Naive thymus-derived CD4-positive, alpha-beta T cell (primary cell): ENCODE measurements at regions of chr17 and their contacts with region 1.

Region 1: GRCh38 chr17:82022981-82023374 is at the start of gene LRRC45:
- DNase-seq: peak; percentile 97 to 100 (median 100)
- ATAC-seq: peak; percentile 97
- H3K4me3 ChIP-seq: peak within 1 kb of the TSS; percentile 71
- H3K4me3 Mint-ChIP-seq: peak within 1 kb of the TSS; percentile 80 to 91 (median 84)
- H3K27ac ChIP-seq: peak within 1 kb of the TSS; percentile 65
- H3K27ac Mint-ChIP-seq: peak within 1 kb of the TSS in 7 of 9 donors; percentile 41 to 88 (median 66)
- H3K4me1 ChIP-seq: peaks cover 16 to 29% of the 10 kb centered on the region in 2 donors
- H3K4me1 Mint-ChIP-seq: peaks cover 7 to 28% (median 22%) of the 10 kb centered on the region in 7 donors
- H3K27me3 ChIP-seq: no peaks in the 10 kb centered on the region
- H3K27me3 Mint-ChIP-seq: no peaks in the 10 kb centered on the region
- total RNA-seq, gene LRRC45: 9.2 to 39.1 (median 15.0) TPM

Region 2: DNA sequence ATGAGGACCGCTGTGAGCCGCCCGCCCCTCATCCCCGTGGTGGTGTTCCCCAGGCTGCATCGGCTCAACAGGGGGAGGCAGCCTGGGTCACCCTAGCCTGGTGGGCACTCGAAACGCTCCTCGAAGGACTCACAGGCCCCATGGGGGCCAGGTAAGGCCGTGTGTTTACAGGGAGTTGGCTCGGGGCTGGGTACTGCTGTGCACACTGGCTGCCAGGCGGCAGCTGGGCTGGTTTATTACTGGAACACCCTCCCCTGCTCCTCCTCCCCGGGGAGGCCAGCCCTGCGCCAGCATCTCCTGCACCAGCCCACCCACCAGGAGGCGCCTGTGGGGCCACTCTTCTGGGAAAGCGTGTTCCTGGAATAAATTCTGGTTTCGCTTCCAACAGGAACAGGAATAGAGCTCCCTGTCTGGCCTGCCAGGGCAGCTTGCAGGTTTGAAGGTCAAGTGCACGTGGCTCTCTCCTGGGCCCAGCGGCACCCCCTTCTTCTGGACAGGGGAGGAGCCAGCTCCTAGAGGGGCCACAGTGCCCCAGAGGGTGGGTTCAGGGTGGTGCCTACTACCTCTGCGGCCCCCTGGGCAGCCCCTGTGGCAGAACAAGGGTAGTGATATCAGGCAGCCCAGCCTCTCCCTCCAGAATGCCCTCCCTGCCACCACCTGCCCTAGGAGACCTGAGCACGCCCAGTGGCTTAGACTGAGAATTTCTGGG is 201.2 kb before region 1 on chr17:
- CTCF ChIA-PET with region 1: no interaction called
- POLR2A ChIA-PET with region 1: no interaction called
- intact Hi-C with region 1: no loop called
- DNase-seq: peak in 1 of 9 donors; percentile 34
- ATAC-seq: peak; percentile 52
- H3K4me3 ChIP-seq: no peak overlapping the region
- H3K4me3 Mint-ChIP-seq: no peak overlapping the region
- H3K27ac ChIP-seq: no peak overlapping the region
- H3K27ac Mint-ChIP-seq: no peak overlapping the region
- H3K4me1 ChIP-seq: no peaks in the 10 kb centered on the region
- H3K4me1 Mint-ChIP-seq: peaks cover 0 to 6% (median 5%) of the 10 kb centered on the region in 7 donors
- H3K27me3 ChIP-seq: no peaks in the 10 kb centered on the region
- H3K27me3 Mint-ChIP-seq: peaks cover 0 to 8% (median 5%) of the 10 kb centered on the region in 5 donors

Region 3: GRCh38 chr17:81871387-81872230 is 151.4 kb before region 1 on chr17:
- CTCF ChIA-PET with region 1: no interaction called
- POLR2A ChIA-PET with region 1: no interaction called
- intact Hi-C with region 1: loop called in 1 of 2 experiments (anchors 1 kb)
- DNase-seq: peak; percentile 93 to 99 (median 97)
- ATAC-seq: peak; percentile 45
- H3K4me3 ChIP-seq: peak overlapping the region; percentile 93
- H3K4me3 Mint-ChIP-seq: peak overlapping the region; percentile 82 to 91 (median 86)
- H3K27ac ChIP-seq: peak overlapping the region; percentile 98
- H3K27ac Mint-ChIP-seq: peak overlapping the region; percentile 88 to 97 (median 95)
- H3K4me1 ChIP-seq: peaks cover 25 to 28% of the 10 kb centered on the region in 2 donors
- H3K4me1 Mint-ChIP-seq: peaks cover 11 to 43% (median 41%) of the 10 kb centered on the region in 7 donors
- H3K27me3 ChIP-seq: no peaks in the 10 kb centered on the region
- H3K27me3 Mint-ChIP-seq: no peaks in the 10 kb centered on the region

Region 4: DNA sequence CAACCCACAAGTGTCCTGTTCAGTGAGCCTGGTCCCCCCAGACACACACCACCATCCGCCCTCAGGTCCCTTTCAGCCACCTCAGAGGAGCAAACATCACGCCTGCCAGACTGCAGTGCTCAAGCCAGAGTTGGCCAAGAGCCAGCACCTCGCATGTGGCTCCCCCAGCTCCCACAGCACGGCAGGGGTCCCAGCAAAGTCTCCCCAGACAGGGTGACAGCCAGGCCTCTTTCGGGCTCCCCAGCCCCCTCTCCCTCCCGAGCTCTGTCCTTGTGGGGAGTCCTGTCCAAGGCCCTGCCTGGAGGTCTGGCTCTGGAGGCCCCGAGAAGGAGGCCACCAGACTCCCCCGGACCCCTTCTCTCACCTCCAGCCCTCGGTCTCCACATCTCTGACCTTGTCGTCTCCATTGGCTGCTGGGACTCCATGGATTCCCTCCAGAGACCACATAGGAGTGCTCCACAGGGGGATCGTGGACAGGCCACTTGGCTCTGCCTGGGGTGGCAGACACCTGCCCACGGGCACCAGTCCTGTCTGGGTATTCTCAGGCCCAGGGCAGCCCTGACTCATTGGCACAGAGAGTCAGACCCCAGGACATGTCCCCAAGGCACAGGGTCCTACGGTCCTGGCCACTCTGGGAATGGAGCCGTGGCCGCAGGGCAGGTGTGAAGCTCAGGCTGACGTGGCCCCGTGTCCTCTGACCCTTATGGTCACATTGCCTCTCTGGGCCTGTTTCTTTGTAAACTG is 74.2 kb before region 1 on chr17:
- CTCF ChIA-PET with region 1: interaction called, 14 read pairs
- POLR2A ChIA-PET with region 1: no interaction called
- intact Hi-C with region 1: no loop called
- DNase-seq: no peak
- ATAC-seq: no peak
- H3K4me3 ChIP-seq: no peak overlapping the region
- H3K4me3 Mint-ChIP-seq: no peak overlapping the region
- H3K27ac ChIP-seq: no peak overlapping the region
- H3K27ac Mint-ChIP-seq: no peak overlapping the region
- H3K4me1 ChIP-seq: peaks cover 0 to 4% of the 10 kb centered on the region in 2 donors
- H3K4me1 Mint-ChIP-seq: peaks cover 0 to 11% (median 4%) of the 10 kb centered on the region in 7 donors
- H3K27me3 ChIP-seq: no peaks in the 10 kb centered on the region
- H3K27me3 Mint-ChIP-seq: peaks cover 0 to 12% (median 0%) of the 10 kb centered on the region in 5 donors

Region 5: GRCh38 chr17:81977211-81978027 is 45.6 kb before region 1 on chr17 and contains the start of gene ASPSCR1:
- CTCF ChIA-PET with region 1: interaction called, 8 read pairs
- POLR2A ChIA-PET with region 1: interaction called, 3 read pairs
- intact Hi-C with region 1: loop called (anchors 1 kb)
- DNase-seq: peak; percentile 86 to 96 (median 93)
- ATAC-seq: peak; percentile 98
- H3K4me3 ChIP-seq: peak within 1 kb of the TSS; percentile 79
- H3K4me3 Mint-ChIP-seq: peak within 1 kb of the TSS; percentile 93 to 99 (median 96)
- H3K27ac ChIP-seq: peak within 1 kb of the TSS; percentile 90
- H3K27ac Mint-ChIP-seq: peak within 1 kb of the TSS; percentile 94 to 99 (median 97)
- H3K4me1 ChIP-seq: peaks cover 16 to 19% of the 10 kb centered on the region in 2 donors
- H3K4me1 Mint-ChIP-seq: peaks cover 26 to 51% (median 38%) of the 10 kb centered on the region in 7 donors
- H3K27me3 ChIP-seq: no peaks in the 10 kb centered on the region
- H3K27me3 Mint-ChIP-seq: peaks cover 0 to 7% (median 0%) of the 10 kb centered on the region in 5 donors
- total RNA-seq, gene ASPSCR1: 36.4 to 46.7 (median 46.0) TPM

Region 6: GRCh38 chr17:82008941-82009405 is 14.0 kb before region 1 on chr17:
- CTCF ChIA-PET with region 1: no interaction called
- POLR2A ChIA-PET with region 1: no interaction called
- intact Hi-C with region 1: no loop called
- DNase-seq: no peak
- ATAC-seq: no peak
- H3K4me3 ChIP-seq: no peak overlapping the region
- H3K4me3 Mint-ChIP-seq: no peak overlapping the region
- H3K27ac ChIP-seq: no peak overlapping the region
- H3K27ac Mint-ChIP-seq: no peak overlapping the region
- H3K4me1 ChIP-seq: no peaks in the 10 kb centered on the region
- H3K4me1 Mint-ChIP-seq: peaks cover 0 to 3% (median 0%) of the 10 kb centered on the region in 7 donors
- H3K27me3 ChIP-seq: no peaks in the 10 kb centered on the region
- H3K27me3 Mint-ChIP-seq: no peaks in the 10 kb centered on the region

Region 7: GRCh38 chr17:82065638-82066303 is 42.8 kb after region 1 on chr17 and contains the start of gene DUS1L:
- CTCF ChIA-PET with region 1: no interaction called
- POLR2A ChIA-PET with region 1: interaction called, 5 read pairs
- intact Hi-C with region 1: loop called in 1 of 2 experiments (anchors 1 kb)
- DNase-seq: peak; percentile 55 to 87 (median 71)
- ATAC-seq: peak; percentile 95
- H3K4me3 ChIP-seq: peak within 1 kb of the TSS; percentile 66
- H3K4me3 Mint-ChIP-seq: peak within 1 kb of the TSS; percentile 73 to 91 (median 82)
- H3K27ac ChIP-seq: peak within 1 kb of the TSS; percentile 86
- H3K27ac Mint-ChIP-seq: peak within 1 kb of the TSS; percentile 86 to 95 (median 93)
- H3K4me1 ChIP-seq: peaks cover 8 to 27% of the 10 kb centered on the region in 2 donors
- H3K4me1 Mint-ChIP-seq: peaks cover 0 to 18% (median 10%) of the 10 kb centered on the region in 7 donors
- H3K27me3 ChIP-seq: no peaks in the 10 kb centered on the region
- H3K27me3 Mint-ChIP-seq: no peaks in the 10 kb centered on the region
- total RNA-seq, gene DUS1L: 127 to 157 (median 147) TPM

Region 8: GRCh38 chr17:82092094-82092994 is 69.4 kb after region 1 on chr17:
- CTCF ChIA-PET with region 1: no interaction called
- POLR2A ChIA-PET with region 1: no interaction called
- intact Hi-C with region 1: no loop called
- DNase-seq: no peak
- ATAC-seq: no peak
- H3K4me3 ChIP-seq: no peak overlapping the region
- H3K4me3 Mint-ChIP-seq: peak overlapping the region in 1 of 10 donors; percentile 41
- H3K27ac ChIP-seq: no peak overlapping the region
- H3K27ac Mint-ChIP-seq: no peak overlapping the region
- H3K4me1 ChIP-seq: peaks cover 4 to 12% of the 10 kb centered on the region in 2 donors
- H3K4me1 Mint-ChIP-seq: peaks cover 0 to 4% (median 0%) of the 10 kb centered on the region in 7 donors
- H3K27me3 ChIP-seq: no peaks in the 10 kb centered on the region
- H3K27me3 Mint-ChIP-seq: no peaks in the 10 kb centered on the region

Region 9: DNA sequence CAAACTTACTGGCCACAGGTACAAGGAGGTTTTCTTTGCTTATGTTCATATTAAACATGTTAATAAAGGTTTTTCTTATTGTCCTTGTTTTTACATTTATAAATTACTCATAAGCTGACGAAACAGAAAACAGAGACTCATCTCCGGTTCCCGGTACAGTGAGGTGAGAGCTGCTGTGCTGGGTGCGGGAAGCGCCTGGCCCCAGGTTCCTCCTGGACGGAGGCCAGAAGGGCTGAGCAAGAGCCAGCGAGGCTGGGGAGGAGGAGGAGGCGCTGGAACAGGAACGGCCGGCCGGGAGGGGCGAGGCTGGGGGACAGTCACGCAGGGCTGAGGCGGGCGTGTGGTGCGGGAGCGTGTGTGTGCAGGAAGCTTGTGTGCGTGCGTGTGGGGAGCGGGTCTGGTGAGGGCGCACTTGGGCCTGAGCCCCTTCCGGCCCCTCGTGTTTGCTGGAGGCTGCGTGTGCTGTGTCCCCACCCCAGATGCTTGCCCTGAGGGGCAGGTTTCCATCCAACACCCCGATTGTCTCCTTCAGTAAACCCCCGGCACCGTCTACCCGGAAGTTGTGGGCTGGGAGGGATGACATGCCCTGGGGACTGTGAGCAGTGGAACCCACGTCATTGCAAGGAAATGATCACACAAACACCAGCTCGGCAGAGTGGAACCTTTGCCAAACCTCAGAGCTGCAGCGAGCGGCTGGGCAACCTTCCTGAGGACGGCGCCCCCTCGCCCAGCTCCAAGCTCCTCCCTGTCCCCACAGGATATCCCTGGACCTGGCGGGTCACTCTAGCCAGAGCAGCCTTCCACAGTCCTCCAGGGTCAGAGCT is 274.9 kb after region 1 on chr17:
- CTCF ChIA-PET with region 1: no interaction called
- POLR2A ChIA-PET with region 1: no interaction called
- intact Hi-C with region 1: loop called (anchors 1 to 5 kb)
- DNase-seq: peak; percentile 68 to 99 (median 96)
- ATAC-seq: peak; percentile 86
- H3K4me3 ChIP-seq: peak overlapping the region; percentile 57
- H3K4me3 Mint-ChIP-seq: peak overlapping the region; percentile 92 to 99 (median 98)
- H3K27ac ChIP-seq: peak overlapping the region; percentile 98
- H3K27ac Mint-ChIP-seq: peak overlapping the region; percentile 100
- H3K4me1 ChIP-seq: peaks cover 61 to 65% of the 10 kb centered on the region in 2 donors
- H3K4me1 Mint-ChIP-seq: peaks cover 23 to 89% (median 76%) of the 10 kb centered on the region in 7 donors
- H3K27me3 ChIP-seq: no peaks in the 10 kb centered on the region
- H3K27me3 Mint-ChIP-seq: peaks cover 0 to 3% (median 0%) of the 10 kb centered on the region in 5 donors